Endothelial cell of umbilical vein (primary cell): ENCODE measurements at regions of chr1 and their contacts with region 1.

Region 1: GRCh38 chr1:33086384-33086850 is 5.5 kb downstream of the AZIN2 start:
- DNase-seq: peak; percentile 77
- H3K4me3 ChIP-seq: no peak overlapping the region
- H3K27ac ChIP-seq: no peak overlapping the region
- H3K4me1 ChIP-seq: peaks cover 3% of the 10 kb centered on the region
- H3K27me3 ChIP-seq: peaks cover 11 to 22% of the 10 kb centered on the region in 2 experiments
- CTCF ChIP-seq: peak; percentile 71 to 91
- POLR2A ChIP-seq: no peak

Region 2: DNA sequence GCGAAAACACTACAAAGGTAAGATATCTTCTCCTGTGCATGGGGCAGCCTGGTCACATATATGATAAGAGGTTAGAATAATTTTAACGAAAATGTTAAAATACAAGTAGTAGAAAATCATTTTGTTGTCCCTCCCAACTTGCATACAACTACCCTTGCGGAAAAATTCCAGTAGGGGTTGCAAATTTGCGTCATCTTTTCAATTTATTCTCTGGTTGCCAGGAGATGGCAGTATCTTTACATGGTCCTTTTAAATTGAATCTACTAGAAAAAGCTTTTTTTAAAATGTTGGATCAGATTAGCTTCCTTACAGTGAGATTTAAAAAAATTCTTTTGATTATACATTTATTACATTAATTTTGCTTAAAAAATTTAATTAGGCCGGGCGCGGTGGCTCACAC is 258.1 kb before region 1 on chr1:
- CTCF ChIA-PET with region 1: interaction called, 10 read pairs
- POLR2A ChIA-PET with region 1: no interaction called
- dilution Hi-C with region 1: no loop called
- intact Hi-C with region 1: no loop called
- DNase-seq: peak; percentile 7
- H3K4me3 ChIP-seq: no peak overlapping the region
- H3K27ac ChIP-seq: no peak overlapping the region
- H3K4me1 ChIP-seq: no peaks in the 10 kb centered on the region
- H3K27me3 ChIP-seq: no peaks in the 10 kb centered on the region
- CTCF ChIP-seq: peak in 1 of 2 donors; percentile 2
- POLR2A ChIP-seq: no peak

Region 3: DNA sequence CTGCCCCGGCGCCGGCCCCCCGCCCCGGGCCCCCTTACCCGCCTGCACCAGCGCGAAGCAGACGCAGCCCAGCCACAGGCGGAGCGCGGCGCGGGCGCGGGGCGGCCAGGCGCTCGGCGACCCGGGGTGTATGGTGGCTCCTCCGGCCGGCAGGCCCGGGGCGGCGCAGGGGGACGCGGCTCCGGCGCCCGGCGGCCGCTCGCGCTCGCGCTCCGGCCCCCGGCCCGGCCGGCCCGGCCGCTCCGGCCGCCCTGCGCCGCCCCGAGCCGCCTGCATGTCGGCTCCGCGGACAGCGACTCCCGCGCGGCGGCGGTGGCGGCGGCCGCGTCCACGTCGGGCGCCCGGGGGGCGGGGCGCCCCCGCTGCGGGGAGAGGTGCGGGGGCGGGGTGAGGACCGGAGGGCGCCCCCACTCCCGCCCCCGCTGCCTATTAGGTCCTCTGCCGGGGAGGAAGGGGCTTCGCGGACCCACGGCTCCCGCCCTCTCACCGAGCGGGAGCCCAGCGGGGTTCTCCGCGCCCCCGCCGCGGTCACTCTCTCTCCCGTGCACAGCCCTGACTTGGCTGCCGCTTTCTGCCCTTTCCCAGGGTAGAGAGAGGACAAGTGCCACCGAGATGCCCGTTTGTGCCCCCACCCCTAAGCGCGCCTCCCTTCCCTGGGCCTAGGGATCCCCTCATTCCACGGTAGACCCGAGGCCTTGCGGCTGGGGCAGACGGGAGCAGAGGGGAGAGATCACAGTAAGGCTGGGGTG is 215.6 kb before region 1 on chr1 and contains the start of gene FNDC5:
- CTCF ChIA-PET with region 1: interaction called, 175 read pairs
- POLR2A ChIA-PET with region 1: no interaction called
- dilution Hi-C with region 1: no loop called
- intact Hi-C with region 1: no loop called
- DNase-seq: no peak
- H3K4me3 ChIP-seq: peak within 1 kb of the TSS in 1 of 3 experiments; percentile 36
- H3K27ac ChIP-seq: no peak within 1 kb of the TSS
- H3K4me1 ChIP-seq: no peaks in the 10 kb centered on the region
- H3K27me3 ChIP-seq: peaks cover 14 to 17% of the 10 kb centered on the region in 2 experiments
- CTCF ChIP-seq: no peak
- POLR2A ChIP-seq: no peak
- total RNA-seq, gene FNDC5: 0.64 TPM in 1 of 2 replicates, not detected in the other

Region 4: GRCh38 chr1:32876341-32877210 is 209.8 kb before region 1 on chr1:
- CTCF ChIA-PET with region 1: interaction called, 175 read pairs
- POLR2A ChIA-PET with region 1: no interaction called
- dilution Hi-C with region 1: no loop called
- intact Hi-C with region 1: loop called (anchors 1 kb)
- DNase-seq: peak; percentile 58
- H3K4me3 ChIP-seq: no peak overlapping the region
- H3K27ac ChIP-seq: no peak overlapping the region
- H3K4me1 ChIP-seq: no peaks in the 10 kb centered on the region
- H3K27me3 ChIP-seq: peaks cover 6 to 9% of the 10 kb centered on the region in 2 experiments
- CTCF ChIP-seq: peak; percentile 89 to 99
- POLR2A ChIP-seq: no peak

Region 5: GRCh38 chr1:33055210-33056008 is 31.0 kb before region 1 on chr1:
- CTCF ChIA-PET with region 1: interaction called, 10 read pairs
- POLR2A ChIA-PET with region 1: no interaction called
- dilution Hi-C with region 1: no loop called
- intact Hi-C with region 1: no loop called
- DNase-seq: peak; percentile 86
- H3K4me3 ChIP-seq: no peak overlapping the region
- H3K27ac ChIP-seq: no peak overlapping the region
- H3K4me1 ChIP-seq: peaks cover 2% of the 10 kb centered on the region
- H3K27me3 ChIP-seq: no peaks in the 10 kb centered on the region
- CTCF ChIP-seq: peak; percentile 65 to 78
- POLR2A ChIP-seq: no peak

Region 6: DNA sequence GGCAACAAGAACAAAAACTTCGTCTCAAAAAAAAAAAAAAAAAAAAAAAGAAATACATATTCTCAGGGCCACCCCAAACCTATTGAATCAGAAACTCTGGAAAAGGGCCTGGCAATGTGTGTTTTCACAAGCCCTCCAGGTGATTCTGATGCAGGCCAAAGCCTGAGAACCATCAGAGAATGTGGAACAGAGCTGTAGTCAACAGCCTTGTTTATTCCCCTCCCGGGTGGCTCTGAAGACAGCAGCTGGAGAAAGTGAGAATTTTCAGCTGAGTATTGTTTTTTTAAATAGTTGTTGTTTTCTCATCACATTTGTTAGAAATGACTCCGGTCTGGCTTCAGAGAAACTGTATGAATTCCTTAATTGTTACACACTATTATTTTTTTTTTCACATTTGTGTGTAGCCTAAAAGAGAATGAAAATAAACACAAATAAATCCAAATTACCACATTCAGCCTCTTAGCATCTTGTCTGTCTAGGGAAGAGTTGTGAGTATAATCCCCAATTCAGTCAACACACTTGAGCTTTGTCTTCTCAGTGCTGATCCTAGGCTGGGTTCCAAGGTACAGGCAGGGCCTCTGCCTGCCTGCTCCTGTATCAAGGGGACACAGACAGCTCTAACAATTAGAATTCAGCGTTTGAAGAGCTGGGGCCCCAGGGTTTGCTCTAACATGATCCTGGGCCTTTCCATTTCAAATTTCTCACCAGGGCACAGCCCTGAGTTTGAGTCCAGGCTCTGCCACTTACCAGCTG is 12.0 kb before region 1 on chr1:
- CTCF ChIA-PET with region 1: interaction called, 11 read pairs
- POLR2A ChIA-PET with region 1: no interaction called
- dilution Hi-C with region 1: no loop called
- intact Hi-C with region 1: no loop called
- DNase-seq: no peak
- H3K4me3 ChIP-seq: no peak overlapping the region
- H3K27ac ChIP-seq: no peak overlapping the region
- H3K4me1 ChIP-seq: no peaks in the 10 kb centered on the region
- H3K27me3 ChIP-seq: peaks cover 0 to 4% of the 10 kb centered on the region in 2 experiments
- CTCF ChIP-seq: no peak
- POLR2A ChIP-seq: no peak